AG04450 (cell line): ENCODE measurements at regions of chr1 and their contacts with region 1.

Region 1: GRCh38 chr1:45999507-45999906 is 132.9 kb downstream of the PIK3R3 start:
- DNase-seq: no peak
- H3K4me3 ChIP-seq: no peak overlapping the region
- H3K27ac ChIP-seq: no peak overlapping the region
- H3K27me3 ChIP-seq: no peaks in the 10 kb centered on the region
- CTCF ChIP-seq: no peak

Region 2: DNA sequence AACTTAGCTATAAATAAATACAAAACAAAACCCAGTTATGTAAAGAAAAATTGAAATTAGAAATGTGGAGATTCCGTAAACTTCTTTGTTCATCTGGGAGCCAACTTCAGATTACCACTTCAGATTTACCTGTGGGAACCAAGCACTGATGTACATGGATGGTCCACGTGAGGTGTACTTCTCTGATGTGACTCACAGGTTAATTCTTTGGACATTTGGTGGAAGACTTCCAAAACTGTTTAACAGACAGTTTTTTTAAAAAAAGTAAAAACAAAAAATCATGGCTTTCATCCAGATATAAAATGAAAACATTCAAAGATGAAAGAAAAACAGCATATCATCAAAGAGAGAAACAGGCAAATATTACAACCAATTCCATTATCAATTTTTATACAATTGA is 104.1 kb before region 1 on chr1:
- CTCF ChIA-PET with region 1: no interaction called
- POLR2A ChIA-PET with region 1: interaction called, 14 read pairs
- DNase-seq: no peak
- H3K4me3 ChIP-seq: no peak overlapping the region
- H3K27ac ChIP-seq: no peak overlapping the region
- H3K27me3 ChIP-seq: no peaks in the 10 kb centered on the region
- CTCF ChIP-seq: no peak